PC-3 (cell line): ENCODE measurements at regions of chr2 and their contacts with region 1.

Region 1: GRCh38 chr2:95389245-95390119 is 13.0 kb upstream of the FAHD2A start:
- DNase-seq: peak; percentile 66
- ATAC-seq: peak; percentile 92
- H3K4me3 ChIP-seq: no peak overlapping the region
- H3K27ac ChIP-seq: no peak overlapping the region
- H3K4me1 ChIP-seq: no peaks in the 10 kb centered on the region
- H3K27me3 ChIP-seq: no peaks in the 10 kb centered on the region
- CTCF ChIP-seq: peak; percentile 90

Region 2: GRCh38 chr2:95333888-95334338 is 55.6 kb before region 1 on chr2:
- CTCF ChIA-PET with region 1: no interaction called
- POLR2A ChIA-PET with region 1: no interaction called
- intact Hi-C with region 1: loop called (anchors 5 kb)
- DNase-seq: peak; percentile 99
- ATAC-seq: peak; percentile 86
- H3K4me3 ChIP-seq: no peak overlapping the region
- H3K27ac ChIP-seq: peak overlapping the region; percentile 97
- H3K4me1 ChIP-seq: peaks cover 41% of the 10 kb centered on the region
- H3K27me3 ChIP-seq: no peaks in the 10 kb centered on the region
- CTCF ChIP-seq: no peak

Region 3: GRCh38 chr2:95379371-95379831 is 10.1 kb before region 1 on chr2:
- CTCF ChIA-PET with region 1: interaction called, 12 read pairs
- POLR2A ChIA-PET with region 1: no interaction called
- intact Hi-C with region 1: no loop called
- DNase-seq: no peak
- ATAC-seq: no peak
- H3K4me3 ChIP-seq: no peak overlapping the region
- H3K27ac ChIP-seq: no peak overlapping the region
- H3K4me1 ChIP-seq: no peaks in the 10 kb centered on the region
- H3K27me3 ChIP-seq: no peaks in the 10 kb centered on the region
- CTCF ChIP-seq: peak; percentile 35; the same call in 1 of the 2 replicates